ENCODE measurements at regions of chr19 and their contacts with region 1.

Region 1: GRCh38 chr19:5524081-5524480 is 43.7 kb downstream of the TINCR start:
- DNase-seq: no peak
- ATAC-seq: no peak
- H3K4me3 ChIP-seq: no peak overlapping the region
- H3K27ac ChIP-seq: no peak overlapping the region
- H3K4me1 ChIP-seq: no peaks in the 10 kb centered on the region
- H3K27me3 ChIP-seq: peaks cover 7 to 39% of the 10 kb centered on the region in 2 experiments; a peak in 3 of 5 replicates
- CTCF ChIP-seq: no peak
- EP300 ChIP-seq: no peak
- POLR2A ChIP-seq: no peak
- RAD21 ChIP-seq: no peak

Region 2: DNA sequence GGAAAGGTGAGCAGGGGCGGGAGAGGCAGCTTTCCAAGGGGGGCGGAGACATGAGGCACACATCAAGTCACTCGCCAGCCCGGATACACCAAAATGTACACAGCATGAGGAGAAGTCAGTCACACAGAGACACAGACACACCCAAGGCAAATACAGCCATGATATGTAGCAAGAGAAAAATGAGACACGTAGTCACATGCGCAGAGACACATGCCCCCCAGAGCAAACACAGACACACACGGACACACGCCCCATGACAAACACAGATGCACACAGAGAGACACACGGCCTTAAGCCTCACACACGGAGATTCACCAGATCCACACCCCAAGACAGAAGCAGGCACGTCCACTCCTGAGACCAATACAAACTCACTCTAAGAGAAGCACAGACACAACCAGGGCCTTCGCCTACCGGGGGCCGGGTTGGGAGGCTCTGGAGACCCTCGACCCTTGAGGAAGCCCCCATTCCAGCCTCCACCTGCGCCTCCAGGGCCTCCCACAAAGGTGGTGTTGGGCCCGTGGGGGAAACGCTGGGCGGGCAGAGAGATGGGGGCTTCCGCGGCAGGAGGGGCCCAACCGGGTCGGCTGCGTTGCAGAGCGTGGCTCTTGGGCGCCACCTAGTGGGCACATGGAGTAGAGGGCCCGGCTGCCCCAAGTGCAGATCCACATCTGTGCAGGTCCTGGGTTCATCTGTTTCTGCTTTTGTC is 53.9 kb after region 1 on chr19:
- CTCF ChIA-PET with region 1: no interaction called
- POLR2A ChIA-PET with region 1: no interaction called
- in situ Hi-C with region 1: no loop called
- intact Hi-C with region 1: loop called (anchors 5 kb)
- DNase-seq: peak; percentile 78 to 90 (median 88)
- ATAC-seq: peak; percentile 99
- H3K4me3 ChIP-seq: no peak overlapping the region; the same call in 1 of the 2 replicates
- H3K27ac ChIP-seq: no peak overlapping the region; the same call in 2 of the 3 replicates
- H3K4me1 ChIP-seq: peaks cover 0 to 12% of the 10 kb centered on the region in 2 experiments; a peak in 3 of 5 replicates
- H3K27me3 ChIP-seq: no peaks in the 10 kb centered on the region
- CTCF ChIP-seq: peak; percentile 89 to 92 (median 89)
- EP300 ChIP-seq: no peak
- POLR2A ChIP-seq: no peak
- RAD21 ChIP-seq: peak; percentile 60 to 82